ENCODE measurements at regions of chr15 and their contacts with region 1.

Region 1: GRCh38 chr15:101014921-101015841 is 96.0 kb downstream of the LRRK1 start:
- DNase-seq: peak; percentile 72 to 76
- H3K4me3 ChIP-seq: no peak overlapping the region
- H3K27ac ChIP-seq: no peak overlapping the region
- H3K4me1 ChIP-seq: no peaks in the 10 kb centered on the region
- H3K27me3 ChIP-seq: no peaks in the 10 kb centered on the region
- CTCF ChIP-seq: peak; percentile 78 to 89 (median 84)
- POLR2A ChIP-seq: no peak

Region 2: GRCh38 chr15:100940767-100941379 is 74.3 kb before region 1 on chr15:
- intact Hi-C with region 1: no loop called
- DNase-seq: no peak
- H3K4me3 ChIP-seq: no peak overlapping the region
- H3K27ac ChIP-seq: no peak overlapping the region
- H3K4me1 ChIP-seq: no peaks in the 10 kb centered on the region
- H3K27me3 ChIP-seq: no peaks in the 10 kb centered on the region
- CTCF ChIP-seq: no peak
- POLR2A ChIP-seq: no peak

Region 3: DNA sequence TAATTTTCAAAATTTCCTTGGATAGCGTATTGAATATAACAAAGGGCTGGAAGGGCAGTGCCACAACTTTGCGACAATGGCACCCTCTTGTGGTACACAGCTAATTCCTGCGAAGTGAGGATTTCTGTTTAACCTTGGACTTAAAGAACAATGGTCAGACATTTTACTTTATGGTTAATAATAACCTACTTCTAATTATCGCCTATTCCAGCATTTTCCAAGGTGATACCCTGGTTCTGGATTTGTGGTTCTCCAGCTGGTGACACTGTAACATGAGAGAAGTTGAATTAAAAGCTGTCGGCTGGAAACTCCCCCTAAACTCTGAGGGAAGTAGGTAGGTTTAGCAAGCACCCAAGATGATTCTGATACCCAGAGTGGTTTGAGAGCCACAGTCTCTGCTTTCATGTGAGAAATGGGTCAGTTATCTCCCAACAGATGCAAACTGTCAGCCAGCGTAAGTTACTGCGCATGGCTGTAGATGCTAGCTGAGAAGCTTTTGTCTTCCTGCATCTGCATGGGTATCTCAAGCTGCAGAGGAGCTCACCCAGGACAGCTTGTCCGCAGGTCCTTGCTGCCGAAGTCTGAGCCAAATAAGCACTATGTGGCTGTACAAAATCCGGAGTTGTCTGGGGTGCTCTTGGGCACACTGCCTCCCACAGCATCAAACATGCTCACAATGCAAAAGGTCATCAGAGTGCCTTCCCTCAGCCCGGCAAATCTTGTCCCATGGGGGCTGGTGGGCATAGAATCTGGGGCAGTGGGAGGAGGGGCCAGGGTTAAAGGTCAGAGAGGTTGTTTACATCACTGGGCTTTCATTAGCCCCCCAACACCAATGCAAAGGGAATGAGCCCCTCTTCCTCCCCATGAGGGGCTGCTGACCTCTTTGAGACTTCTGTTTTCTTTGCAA is 243.3 kb after region 1 on chr15:
- intact Hi-C with region 1: loop called (anchors 5 kb)
- DNase-seq: peak; percentile 61 to 66
- H3K4me3 ChIP-seq: no peak overlapping the region
- H3K27ac ChIP-seq: no peak overlapping the region
- H3K4me1 ChIP-seq: no peaks in the 10 kb centered on the region
- H3K27me3 ChIP-seq: no peaks in the 10 kb centered on the region
- CTCF ChIP-seq: peak; percentile 83 to 93 (median 88)
- POLR2A ChIP-seq: no peak